HepG2 (cell line): ENCODE measurements at regions of chr6 and their contacts with region 1.

Region 1: GRCh38 chr6:149834513-149835481 is 29.4 kb downstream of the LRP11 start:
- DNase-seq: peak; percentile 64
- ATAC-seq: no peak
- H3K4me3 ChIP-seq: no peak overlapping the region
- H3K27ac ChIP-seq: no peak overlapping the region
- H3K4me1 ChIP-seq: peaks cover 25% of the 10 kb centered on the region
- H3K27me3 ChIP-seq: no peaks in the 10 kb centered on the region
- CTCF ChIP-seq: peak; percentile 87
- EP300 ChIP-seq: no peak
- POLR2A ChIP-seq: no peak
- RAD21 ChIP-seq: peak; percentile 78

Region 2: DNA sequence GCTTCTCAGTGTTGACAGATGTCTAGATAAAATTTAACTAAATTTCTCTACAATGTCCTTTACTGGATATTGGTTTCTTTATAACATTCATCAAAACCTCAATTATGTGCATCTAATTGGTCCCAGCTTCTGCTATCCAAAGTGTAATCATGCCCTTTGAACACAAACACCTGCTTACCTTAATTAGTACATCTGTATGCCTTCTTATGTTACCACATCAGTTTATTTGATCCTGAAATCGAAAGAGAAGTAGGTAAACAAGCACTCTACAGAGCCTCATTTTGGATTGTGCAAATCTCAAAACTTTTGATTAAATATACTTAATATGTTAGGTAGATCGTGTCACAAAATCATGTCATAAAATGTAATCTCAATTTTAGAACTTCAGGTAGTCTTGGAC is 480.8 kb before region 1 on chr6:
- CTCF ChIA-PET with region 1: no interaction called
- POLR2A ChIA-PET with region 1: no interaction called
- in situ Hi-C with region 1: no loop called
- intact Hi-C with region 1: no loop called
- DNase-seq: no peak
- ATAC-seq: no peak
- H3K4me3 ChIP-seq: no peak overlapping the region
- H3K27ac ChIP-seq: no peak overlapping the region
- H3K4me1 ChIP-seq: peaks cover 18% of the 10 kb centered on the region
- H3K27me3 ChIP-seq: no peaks in the 10 kb centered on the region
- CTCF ChIP-seq: no peak
- EP300 ChIP-seq: no peak
- POLR2A ChIP-seq: no peak
- RAD21 ChIP-seq: no peak

Region 3: GRCh38 chr6:149648148-149649145 is 186.3 kb before region 1 on chr6 and contains the start of gene KATNA1:
- CTCF ChIA-PET with region 1: no interaction called
- POLR2A ChIA-PET with region 1: no interaction called
- in situ Hi-C with region 1: no loop called
- intact Hi-C with region 1: loop called (anchors 5 kb)
- DNase-seq: peak; percentile 96
- ATAC-seq: peak; percentile 98
- H3K4me3 ChIP-seq: peak within 1 kb of the TSS; percentile 74 to 85 (median 84)
- H3K27ac ChIP-seq: peak within 1 kb of the TSS; percentile 78
- H3K4me1 ChIP-seq: peaks cover 25% of the 10 kb centered on the region
- H3K27me3 ChIP-seq: no peaks in the 10 kb centered on the region; a peak in 1 of 5 replicates
- CTCF ChIP-seq: peak; percentile 68
- EP300 ChIP-seq: peak in 1 of 2 experiments; percentile 41; a peak in 1 of 4 replicates
- POLR2A ChIP-seq: peak; percentile 94 to 96
- RAD21 ChIP-seq: peak; percentile 71
- total RNA-seq, gene KATNA1: 25.3 and 31.2 TPM in 2 replicates

Region 4: GRCh38 chr6:149723771-149724417 is 110.9 kb before region 1 on chr6:
- CTCF ChIA-PET with region 1: no interaction called
- POLR2A ChIA-PET with region 1: no interaction called
- in situ Hi-C with region 1: no loop called
- intact Hi-C with region 1: loop called (anchors 2 kb)
- DNase-seq: peak; percentile 77
- ATAC-seq: peak; percentile 98
- H3K4me3 ChIP-seq: no peak overlapping the region
- H3K27ac ChIP-seq: no peak overlapping the region
- H3K4me1 ChIP-seq: peaks cover 6% of the 10 kb centered on the region
- H3K27me3 ChIP-seq: no peaks in the 10 kb centered on the region
- CTCF ChIP-seq: peak; percentile 84
- EP300 ChIP-seq: no peak
- POLR2A ChIP-seq: no peak
- RAD21 ChIP-seq: peak; percentile 70

Region 5: GRCh38 chr6:149863697-149864577 is 29.1 kb after region 1 on chr6 and contains the start of gene LRP11:
- CTCF ChIA-PET with region 1: interaction called, 37 read pairs
- POLR2A ChIA-PET with region 1: interaction called, 8 read pairs
- in situ Hi-C with region 1: no loop called
- intact Hi-C with region 1: loop called (anchors 1 kb)
- DNase-seq: peak; percentile 82
- ATAC-seq: peak; percentile 73
- H3K4me3 ChIP-seq: peak within 1 kb of the TSS; percentile 66 to 93 (median 83)
- H3K27ac ChIP-seq: peak within 1 kb of the TSS; percentile 87
- H3K4me1 ChIP-seq: peaks cover 63% of the 10 kb centered on the region
- H3K27me3 ChIP-seq: no peaks in the 10 kb centered on the region; a peak in 1 of 5 replicates
- CTCF ChIP-seq: no peak; the same call in 1 of the 2 replicates
- EP300 ChIP-seq: no peak; a peak in 1 of 4 replicates
- POLR2A ChIP-seq: peak in 1 of 2 experiments; percentile 88; a peak in 2 of 4 replicates
- RAD21 ChIP-seq: peak; percentile 62
- total RNA-seq, gene LRP11: 32.1 and 48.9 TPM in 2 replicates

Region 6: GRCh38 chr6:149925974-149926777 is 91.4 kb after region 1 on chr6:
- CTCF ChIA-PET with region 1: interaction called, 50 read pairs
- POLR2A ChIA-PET with region 1: no interaction called
- in situ Hi-C with region 1: no loop called
- intact Hi-C with region 1: loop called (anchors 1 kb)
- DNase-seq: peak; percentile 74
- ATAC-seq: peak; percentile 90
- H3K4me3 ChIP-seq: peak overlapping the region; percentile 65 to 82 (median 71)
- H3K27ac ChIP-seq: no peak overlapping the region
- H3K4me1 ChIP-seq: peaks cover 34% of the 10 kb centered on the region
- H3K27me3 ChIP-seq: peaks cover 13 to 55% of the 10 kb centered on the region in 2 experiments
- CTCF ChIP-seq: peak; percentile 99
- EP300 ChIP-seq: no peak
- POLR2A ChIP-seq: no peak
- RAD21 ChIP-seq: peak; percentile 93